Activated naive CD4-positive, alpha-beta T cell treated with anti-CD3 and anti-CD28 coated beads, Interleukin-2, amount 10 ng/mL, durations not matched to agents 7 days and 5 days (primary cell): ENCODE measurements at regions of chr17 and their contacts with region 1.

Region 1: DNA sequence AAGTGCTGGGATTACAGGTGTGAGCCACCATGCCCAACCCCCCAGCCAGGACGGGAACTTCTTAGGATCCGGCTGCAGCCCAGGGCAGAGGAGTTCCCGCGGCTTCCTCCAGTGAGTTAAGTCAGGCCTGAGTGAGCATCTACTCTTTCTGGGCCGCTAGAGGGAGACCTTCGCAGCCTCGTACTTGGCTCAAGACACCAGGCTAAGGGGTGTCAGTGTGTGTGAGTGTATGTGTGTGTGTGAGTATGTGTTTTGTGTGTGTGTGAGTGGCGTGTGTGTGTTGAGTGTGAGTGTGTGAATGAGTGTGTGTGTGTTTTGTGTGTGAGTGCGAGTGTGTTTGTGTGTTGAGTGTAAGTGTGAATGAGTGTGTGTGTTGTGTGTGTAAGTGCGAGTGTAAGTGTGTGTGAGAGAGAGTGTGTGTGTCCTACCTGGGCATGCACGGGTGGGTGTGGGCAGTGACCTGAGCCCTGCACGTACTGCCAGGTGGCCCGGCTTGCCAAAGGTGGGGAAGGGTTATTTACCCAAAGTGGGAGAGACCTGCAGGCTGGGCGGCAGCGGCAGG is 58.5 kb downstream of the TMEM235 start:
- DNase-seq: peak; percentile 85
- H3K4me3 Mint-ChIP-seq: no peak overlapping the region
- H3K27ac Mint-ChIP-seq: no peak overlapping the region
- H3K4me1 Mint-ChIP-seq: peaks cover 6% of the 10 kb centered on the region
- H3K27me3 Mint-ChIP-seq: peaks cover 12% of the 10 kb centered on the region

Region 2: DNA sequence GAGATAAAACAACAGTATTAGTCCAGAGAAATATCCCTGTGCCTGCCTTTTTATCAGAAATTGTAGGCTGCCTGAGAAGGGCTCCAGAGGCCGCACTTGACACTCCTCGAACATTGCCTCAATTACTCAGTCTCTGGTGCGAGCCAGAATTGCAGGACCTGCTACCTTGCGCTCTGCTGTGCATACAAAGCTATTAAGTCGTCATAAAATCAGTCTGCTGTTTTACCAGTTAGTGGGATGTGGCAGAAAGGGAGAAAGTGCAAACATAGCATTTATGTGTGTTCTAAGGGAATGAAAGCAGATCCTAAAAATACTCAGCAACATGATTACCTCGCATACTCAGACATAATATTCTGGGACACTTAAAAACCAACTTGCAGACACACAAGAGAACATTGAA is 231.9 kb before region 1 on chr17:
- CTCF ChIA-PET with region 1: no interaction called
- DNase-seq: no peak
- H3K4me3 Mint-ChIP-seq: no peak overlapping the region
- H3K27ac Mint-ChIP-seq: no peak overlapping the region
- H3K4me1 Mint-ChIP-seq: no peaks in the 10 kb centered on the region
- H3K27me3 Mint-ChIP-seq: no peaks in the 10 kb centered on the region

Region 3: GRCh38 chr17:78186692-78187595 is 102.9 kb before region 1 on chr17 and contains the starts of genes AFMID and TK1:
- CTCF ChIA-PET with region 1: no interaction called
- DNase-seq: peak; percentile 95
- H3K4me3 Mint-ChIP-seq: peak within 1 kb of the TSS; percentile 87
- H3K27ac Mint-ChIP-seq: peak within 1 kb of the TSS; percentile 78
- H3K4me1 Mint-ChIP-seq: peaks cover 54% of the 10 kb centered on the region
- H3K27me3 Mint-ChIP-seq: no peaks in the 10 kb centered on the region

Region 4: GRCh38 chr17:78263063-78263743 is 26.7 kb before region 1 on chr17:
- CTCF ChIA-PET with region 1: no interaction called
- DNase-seq: peak; percentile 67
- H3K4me3 Mint-ChIP-seq: no peak overlapping the region
- H3K27ac Mint-ChIP-seq: peak overlapping the region; percentile 90
- H3K4me1 Mint-ChIP-seq: peaks cover 52% of the 10 kb centered on the region
- H3K27me3 Mint-ChIP-seq: no peaks in the 10 kb centered on the region

Region 5: DNA sequence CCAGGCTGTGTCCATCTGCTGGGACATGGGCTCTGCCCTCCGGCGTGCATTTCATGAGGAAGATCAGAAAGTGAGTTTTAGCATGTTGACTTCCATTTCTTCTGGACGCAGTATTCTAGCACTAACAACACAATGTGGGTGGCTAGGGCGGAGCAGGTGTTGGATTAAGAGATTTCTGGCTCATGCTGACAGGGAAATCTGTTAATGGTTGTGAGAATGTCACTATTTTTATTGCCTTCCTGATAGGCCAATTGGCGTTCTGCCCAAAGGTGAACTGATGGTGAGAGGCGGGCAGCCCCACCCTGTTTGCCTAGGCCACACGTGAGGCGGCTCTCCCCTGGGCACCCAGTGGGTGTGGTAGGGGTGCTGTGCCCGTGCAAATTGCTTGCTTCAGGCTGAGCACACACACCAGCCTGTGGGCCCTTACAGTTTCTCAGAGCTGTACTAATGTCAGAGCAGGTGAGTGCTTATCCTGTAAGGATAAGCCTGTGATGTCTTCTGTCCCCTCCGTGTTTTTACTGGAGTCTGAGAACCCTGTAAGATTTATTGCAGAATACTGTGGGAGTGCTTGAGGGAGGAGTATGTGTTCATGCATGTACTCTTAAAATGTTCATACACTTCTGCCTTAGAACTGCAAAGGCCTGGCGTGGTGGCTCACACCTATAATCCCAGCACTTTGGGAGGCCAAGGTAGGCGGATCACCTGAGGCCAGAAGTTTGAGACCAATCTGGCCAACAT is 119.5 kb after region 1 on chr17:
- CTCF ChIA-PET with region 1: no interaction called
- DNase-seq: no peak
- H3K4me3 Mint-ChIP-seq: no peak overlapping the region
- H3K27ac Mint-ChIP-seq: peak overlapping the region; percentile 34
- H3K4me1 Mint-ChIP-seq: peaks cover 80% of the 10 kb centered on the region
- H3K27me3 Mint-ChIP-seq: no peaks in the 10 kb centered on the region

Region 6: DNA sequence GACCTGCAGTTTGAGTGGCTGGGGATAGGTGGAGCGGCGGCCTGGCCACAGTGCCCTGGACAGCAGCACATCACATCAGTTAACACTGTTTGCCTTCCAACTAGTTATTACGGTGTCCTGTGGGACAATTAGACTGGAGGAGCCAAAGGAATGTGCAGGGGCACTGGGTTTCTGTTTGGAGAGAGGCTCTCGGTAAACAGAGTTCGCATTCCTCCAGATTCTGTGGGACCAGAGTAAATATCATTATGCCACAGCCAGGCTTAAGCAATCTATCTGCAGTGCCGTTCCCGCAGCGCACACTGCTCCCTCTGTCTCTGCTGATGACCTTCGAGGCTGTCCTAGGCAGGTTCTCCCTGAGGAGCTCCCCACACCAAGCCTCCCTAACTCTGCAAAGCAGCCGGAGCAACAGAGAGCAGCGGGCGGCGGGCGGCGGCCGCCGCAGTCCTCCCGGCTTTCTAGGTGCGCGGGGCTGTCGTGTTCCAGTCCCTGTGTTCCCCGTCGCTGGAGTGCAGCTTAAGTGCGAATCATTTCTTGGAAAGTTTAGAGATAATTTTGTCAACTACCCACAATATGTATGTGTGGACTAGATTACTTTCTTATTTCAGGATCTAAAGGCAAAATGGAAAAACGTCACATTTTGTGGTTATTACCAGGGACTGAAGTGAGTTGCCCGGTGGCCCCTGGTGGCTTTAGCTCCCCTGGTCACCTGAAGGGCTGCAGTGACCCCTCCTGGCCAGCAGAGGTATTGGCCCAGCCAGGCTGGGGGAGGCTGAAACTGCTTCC is 131.8 kb after region 1 on chr17:
- CTCF ChIA-PET with region 1: interaction called, 31 read pairs
- DNase-seq: peak; percentile 81
- H3K4me3 Mint-ChIP-seq: no peak overlapping the region
- H3K27ac Mint-ChIP-seq: peak overlapping the region; percentile 67
- H3K4me1 Mint-ChIP-seq: peaks cover 58% of the 10 kb centered on the region
- H3K27me3 Mint-ChIP-seq: no peaks in the 10 kb centered on the region